ENCODE measurements at regions of chr7 and their contacts with region 1.

Region 1: DNA sequence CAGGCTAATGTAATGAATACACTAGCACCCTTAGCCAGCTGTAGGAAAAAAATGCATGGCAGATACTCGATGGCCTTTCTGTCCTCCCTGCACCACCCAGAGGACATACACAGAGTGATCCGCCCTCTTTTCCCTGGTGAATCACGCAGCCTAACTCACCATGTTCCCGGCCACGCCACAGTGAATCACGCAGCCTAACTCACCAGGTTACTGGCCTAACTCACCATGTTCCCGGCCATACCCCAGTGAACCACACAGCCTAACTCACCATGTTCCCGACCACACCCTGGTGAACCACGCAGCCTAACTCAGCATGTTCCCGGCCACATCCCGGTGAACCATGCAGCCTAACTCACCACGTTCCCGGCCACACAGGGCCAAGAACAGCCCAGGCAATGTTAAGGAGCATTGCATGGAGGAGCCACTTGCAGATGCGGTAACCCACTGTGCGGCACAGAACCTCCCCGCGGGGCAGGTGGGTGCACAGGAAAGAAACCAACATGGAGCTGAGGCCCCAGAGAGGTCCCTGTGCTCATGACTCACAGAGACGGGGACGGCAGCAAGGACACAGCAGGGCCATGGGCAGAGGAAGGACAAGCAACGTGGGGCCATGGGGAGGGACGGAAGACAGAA is 508.5 kb downstream of the DNAJB6 start:
- DNase-seq: peak; percentile 88
- ATAC-seq: peak; percentile 97
- H3K4me3 ChIP-seq: no peak overlapping the region
- H3K27ac ChIP-seq: peak overlapping the region; percentile 95
- H3K4me1 ChIP-seq: peaks cover 11% of the 10 kb centered on the region
- H3K27me3 ChIP-seq: no peaks in the 10 kb centered on the region
- CTCF ChIP-seq: no peak

Region 2: DNA sequence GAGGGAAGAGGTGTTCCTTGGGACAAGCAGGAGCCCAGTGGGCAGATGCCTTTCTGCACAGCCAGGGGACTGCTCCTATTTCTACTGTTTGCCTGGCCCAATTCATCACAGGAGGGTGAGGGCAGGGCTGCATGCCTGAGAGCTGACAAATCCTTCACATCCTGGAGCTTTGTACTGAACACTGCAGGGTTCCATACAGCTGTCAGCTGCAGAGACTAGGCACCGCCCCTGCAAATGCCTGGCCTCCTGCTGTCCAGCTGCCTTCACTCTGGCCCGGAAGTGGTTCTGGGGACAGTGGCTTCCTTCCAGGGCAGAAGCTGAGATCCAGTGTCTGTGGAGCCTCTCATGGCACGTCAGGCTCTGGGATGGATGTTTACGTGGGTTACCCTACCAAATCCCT is 37.8 kb before region 1 on chr7:
- CTCF ChIA-PET with region 1: no interaction called
- POLR2A ChIA-PET with region 1: no interaction called
- intact Hi-C with region 1: loop called (anchors 1 kb)
- DNase-seq: peak; percentile 87
- ATAC-seq: peak; percentile 99
- H3K4me3 ChIP-seq: no peak overlapping the region
- H3K27ac ChIP-seq: peak overlapping the region; percentile 58
- H3K4me1 ChIP-seq: peaks cover 15% of the 10 kb centered on the region
- H3K27me3 ChIP-seq: no peaks in the 10 kb centered on the region
- CTCF ChIP-seq: no peak

Region 3: DNA sequence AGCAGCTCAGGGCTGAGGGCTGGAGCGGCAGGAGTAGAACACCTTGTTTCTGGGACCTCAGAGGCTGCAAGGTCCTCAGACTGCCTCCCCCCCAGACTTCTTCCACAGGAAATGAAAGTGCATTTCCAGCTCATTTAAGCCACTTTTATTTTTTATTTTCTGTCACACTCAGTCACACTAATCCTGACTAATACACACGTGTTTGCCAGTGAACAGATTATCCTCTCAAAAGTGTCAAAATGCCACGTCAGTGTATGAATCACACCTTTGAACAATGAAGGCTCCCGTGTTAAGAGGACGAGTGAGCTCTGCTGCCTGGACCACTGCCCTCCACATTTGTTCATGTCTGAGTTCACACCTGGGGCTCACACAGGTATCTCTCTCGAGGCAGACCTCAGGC is 20.0 kb before region 1 on chr7:
- CTCF ChIA-PET with region 1: no interaction called
- POLR2A ChIA-PET with region 1: no interaction called
- intact Hi-C with region 1: no loop called
- DNase-seq: peak; percentile 37
- ATAC-seq: peak; percentile 48
- H3K4me3 ChIP-seq: no peak overlapping the region
- H3K27ac ChIP-seq: no peak overlapping the region
- H3K4me1 ChIP-seq: no peaks in the 10 kb centered on the region
- H3K27me3 ChIP-seq: no peaks in the 10 kb centered on the region
- CTCF ChIP-seq: no peak

Region 4: GRCh38 chr7:158031867-158032308 is 186.6 kb after region 1 on chr7:
- CTCF ChIA-PET with region 1: no interaction called
- POLR2A ChIA-PET with region 1: no interaction called
- intact Hi-C with region 1: no loop called
- DNase-seq: no peak
- ATAC-seq: no peak
- H3K4me3 ChIP-seq: no peak overlapping the region
- H3K27ac ChIP-seq: no peak overlapping the region
- H3K4me1 ChIP-seq: no peaks in the 10 kb centered on the region
- H3K27me3 ChIP-seq: peaks cover 9% of the 10 kb centered on the region; the same call in 1 of the 2 replicates
- CTCF ChIP-seq: no peak

Measured in PC-3 (cell line).